Activated CD4-positive, alpha-beta T cell treated with anti-CD3 and anti-CD28 coated beads, Interleukin-2, amount 10 ng/mL, durations not matched to agents 24 days and 14 days (primary cell): ENCODE measurements at regions of chr2 and their contacts with region 1.

Region 1: GRCh38 chr2:227460070-227460485 is 11.9 kb upstream of the AGFG1 start:
- DNase-seq: peak; percentile 79
- H3K4me3 Mint-ChIP-seq: peak overlapping the region; percentile 51
- H3K27ac Mint-ChIP-seq: peak overlapping the region; percentile 78
- H3K4me1 Mint-ChIP-seq: peaks cover 68% of the 10 kb centered on the region
- H3K27me3 Mint-ChIP-seq: no peaks in the 10 kb centered on the region

Region 2: DNA sequence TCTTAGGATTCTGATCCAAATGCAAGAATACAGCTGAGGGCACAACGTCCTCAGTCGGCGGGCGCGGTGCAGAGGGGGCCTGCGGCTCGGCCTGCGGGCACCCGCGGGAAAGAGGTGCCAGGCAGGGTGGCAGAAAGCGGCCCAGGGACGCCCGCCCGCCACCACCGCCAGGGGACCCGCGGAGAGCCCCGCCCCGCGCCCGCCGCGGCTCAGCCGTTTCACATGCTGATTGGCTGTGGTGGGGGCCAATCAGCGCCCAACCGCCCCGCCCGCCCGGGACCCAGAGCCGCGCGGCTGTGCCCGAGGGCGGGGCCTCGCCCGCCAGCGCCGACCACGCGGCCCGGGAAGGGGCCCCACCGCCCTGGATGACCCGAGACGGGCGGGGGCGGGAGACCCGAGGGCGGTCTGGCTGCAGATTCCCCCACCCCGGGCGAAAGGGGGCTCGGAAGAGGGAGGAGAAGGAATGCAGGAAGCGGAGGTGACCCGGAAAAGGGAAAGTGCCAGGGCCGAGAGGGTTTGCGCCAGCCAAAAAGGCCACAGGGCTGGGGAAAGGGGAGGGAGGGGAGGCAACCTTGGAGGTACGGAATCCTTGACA is 668.5 kb before region 1 on chr2:
- intact Hi-C with region 1: loop called (anchors 10 kb)
- DNase-seq: peak; percentile 98
- H3K4me3 Mint-ChIP-seq: peak overlapping the region; percentile 98
- H3K27ac Mint-ChIP-seq: peak overlapping the region; percentile 100
- H3K4me1 Mint-ChIP-seq: peaks cover 48% of the 10 kb centered on the region
- H3K27me3 Mint-ChIP-seq: no peaks in the 10 kb centered on the region

Region 3: GRCh38 chr2:227324995-227325838 is 134.9 kb before region 1 on chr2 and contains the start of gene MFF:
- intact Hi-C with region 1: loop called (anchors 2 kb)
- DNase-seq: peak; percentile 97
- H3K4me3 Mint-ChIP-seq: peak within 1 kb of the TSS; percentile 94
- H3K27ac Mint-ChIP-seq: peak within 1 kb of the TSS; percentile 95
- H3K4me1 Mint-ChIP-seq: peaks cover 32% of the 10 kb centered on the region
- H3K27me3 Mint-ChIP-seq: peaks cover 6% of the 10 kb centered on the region
- total RNA-seq, gene MFF: 69.5 and 71.6 TPM in 2 replicates

Region 4: DNA sequence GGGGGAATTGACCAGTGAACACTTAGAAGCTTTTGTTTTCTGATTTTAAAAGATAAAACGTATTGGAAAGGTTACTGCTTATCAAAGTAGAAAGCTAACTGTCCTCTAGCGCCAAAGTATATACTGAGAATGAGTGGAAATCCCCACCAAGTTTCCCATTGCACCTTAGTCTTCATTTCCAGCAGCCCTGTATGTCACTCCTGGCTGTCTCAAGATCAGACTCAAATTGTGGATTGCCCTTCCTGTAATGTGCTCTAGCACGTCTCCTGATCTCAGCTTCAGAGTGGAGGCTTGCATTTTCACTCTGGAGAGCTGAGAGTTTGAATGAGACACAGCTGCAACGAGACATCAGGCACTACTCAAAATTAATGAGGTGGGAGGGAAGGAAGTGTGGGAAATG is 108.4 kb before region 1 on chr2:
- intact Hi-C with region 1: no loop called
- DNase-seq: no peak
- H3K4me3 Mint-ChIP-seq: no peak overlapping the region
- H3K27ac Mint-ChIP-seq: peak overlapping the region; percentile 56
- H3K4me1 Mint-ChIP-seq: peaks cover 9% of the 10 kb centered on the region
- H3K27me3 Mint-ChIP-seq: no peaks in the 10 kb centered on the region

Region 5: GRCh38 chr2:227411320-227411989 is 48.6 kb before region 1 on chr2:
- intact Hi-C with region 1: loop called (anchors 1 kb)
- DNase-seq: peak; percentile 80
- H3K4me3 Mint-ChIP-seq: peak overlapping the region; percentile 63
- H3K27ac Mint-ChIP-seq: peak overlapping the region; percentile 94
- H3K4me1 Mint-ChIP-seq: peaks cover 57% of the 10 kb centered on the region
- H3K27me3 Mint-ChIP-seq: no peaks in the 10 kb centered on the region

Region 6: DNA sequence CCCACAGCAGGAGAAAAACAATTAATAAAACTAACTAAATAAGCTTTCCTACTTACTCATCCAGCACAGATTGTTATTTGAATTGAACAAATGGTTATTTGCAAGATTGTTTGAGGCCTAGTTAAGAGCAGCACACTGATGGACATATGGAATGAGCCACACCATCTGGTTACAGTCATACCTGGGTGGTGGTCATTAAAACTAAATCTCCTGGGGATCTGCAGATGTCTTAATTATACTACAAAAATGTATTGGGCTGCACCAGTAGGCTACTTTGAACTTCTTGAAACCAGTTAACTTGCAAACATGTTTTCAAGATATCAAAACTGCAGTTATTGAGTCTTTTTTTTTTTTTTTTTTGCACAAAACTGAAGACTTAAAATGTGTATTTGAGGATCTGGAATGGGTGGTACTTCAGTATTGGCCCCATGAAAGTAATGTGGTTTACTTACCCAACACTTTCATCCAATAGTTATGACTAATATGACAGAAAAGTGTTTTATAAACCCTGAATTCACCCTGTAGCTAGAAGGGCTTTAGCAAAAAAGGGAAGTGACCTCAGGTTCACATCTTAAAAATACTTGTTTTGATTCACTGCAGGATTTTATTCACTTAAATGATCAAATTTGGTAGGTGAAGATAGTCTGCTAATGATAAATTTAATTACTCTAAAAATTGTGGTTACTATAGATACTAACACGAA is 22.7 kb after region 1 on chr2:
- intact Hi-C with region 1: loop called (anchors 1 kb)
- DNase-seq: no peak
- H3K4me3 Mint-ChIP-seq: peak overlapping the region; percentile 2
- H3K27ac Mint-ChIP-seq: peak overlapping the region; percentile 22
- H3K4me1 Mint-ChIP-seq: peaks cover 42% of the 10 kb centered on the region
- H3K27me3 Mint-ChIP-seq: no peaks in the 10 kb centered on the region

Region 7: DNA sequence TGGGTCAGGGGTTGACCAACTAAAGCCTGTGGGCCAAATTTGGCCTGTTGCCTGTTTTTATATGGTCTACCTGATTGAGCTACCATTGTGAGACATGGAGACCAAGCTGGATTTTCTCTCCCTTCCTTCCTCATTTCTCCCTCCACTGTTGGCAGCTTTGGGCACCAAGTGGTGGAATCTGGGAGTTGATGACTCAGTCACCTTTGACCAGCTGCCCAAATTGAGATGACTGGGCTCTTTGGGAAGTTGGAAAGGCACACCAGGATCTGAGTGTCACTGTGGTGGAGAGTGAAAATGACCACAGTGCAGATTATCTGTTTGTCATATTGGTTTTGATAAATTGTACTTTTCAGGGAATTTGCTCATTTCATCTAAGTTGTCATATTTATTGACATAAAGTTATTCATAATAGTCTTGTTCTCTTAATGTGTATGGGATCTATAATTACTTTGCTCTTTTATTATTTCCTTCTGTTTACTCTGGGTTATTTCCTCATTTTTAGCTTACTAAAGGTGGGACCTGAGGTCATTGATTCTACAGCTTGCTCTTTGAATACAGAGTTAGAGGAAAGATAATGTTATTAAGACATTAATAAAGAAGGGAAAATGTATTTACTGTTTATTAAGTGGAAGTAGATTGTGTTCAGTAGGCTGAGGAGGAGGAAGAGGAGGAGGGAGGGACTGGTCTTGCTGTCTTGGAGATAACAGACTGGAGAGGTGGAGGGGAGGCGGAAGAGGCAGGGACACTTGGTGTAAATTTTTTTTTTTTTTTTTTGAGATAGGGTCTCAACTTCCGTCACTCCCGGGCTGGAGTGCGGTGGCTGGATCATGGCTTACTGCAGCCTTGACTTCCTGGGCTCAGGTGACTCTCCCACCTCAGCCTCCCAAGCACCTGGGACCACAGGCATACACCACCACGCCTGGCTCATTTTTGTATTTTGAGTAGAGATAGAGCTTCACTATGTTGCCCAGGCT is 43.6 kb after region 1 on chr2:
- intact Hi-C with region 1: no loop called
- DNase-seq: no peak
- H3K4me3 Mint-ChIP-seq: no peak overlapping the region
- H3K27ac Mint-ChIP-seq: no peak overlapping the region
- H3K4me1 Mint-ChIP-seq: peaks cover 34% of the 10 kb centered on the region
- H3K27me3 Mint-ChIP-seq: no peaks in the 10 kb centered on the region

Region 8: GRCh38 chr2:227551836-227552235 is 91.8 kb after region 1 on chr2:
- intact Hi-C with region 1: no loop called
- DNase-seq: no peak
- H3K4me3 Mint-ChIP-seq: no peak overlapping the region
- H3K27ac Mint-ChIP-seq: no peak overlapping the region
- H3K4me1 Mint-ChIP-seq: no peaks in the 10 kb centered on the region
- H3K27me3 Mint-ChIP-seq: no peaks in the 10 kb centered on the region

Region 9: DNA sequence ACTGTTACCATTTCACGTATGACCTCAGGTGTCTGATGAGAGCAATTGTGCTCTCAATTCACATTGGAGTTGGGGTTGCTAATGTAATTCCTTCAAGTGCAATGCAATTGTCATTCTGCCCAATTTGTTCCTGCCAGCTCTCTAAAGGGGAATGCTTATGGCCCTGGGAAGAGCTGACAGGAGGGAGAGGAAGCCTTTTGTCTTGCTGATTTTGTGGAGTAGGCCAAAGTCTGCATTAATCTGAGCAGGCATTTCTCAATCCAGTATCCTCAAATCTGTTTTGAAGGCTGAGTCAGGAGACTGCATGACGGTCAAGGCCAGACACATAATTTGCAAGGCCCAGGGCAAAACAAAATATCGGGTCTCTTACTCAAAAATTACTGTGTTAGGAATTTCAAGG is 1047.8 kb after region 1 on chr2:
- intact Hi-C with region 1: no loop called
- DNase-seq: no peak
- H3K4me3 Mint-ChIP-seq: no peak overlapping the region
- H3K27ac Mint-ChIP-seq: no peak overlapping the region
- H3K4me1 Mint-ChIP-seq: no peaks in the 10 kb centered on the region
- H3K27me3 Mint-ChIP-seq: no peaks in the 10 kb centered on the region